Natural killer cell (primary cell): ENCODE measurements at regions of chr1 and their contacts with region 1.

Region 1: DNA sequence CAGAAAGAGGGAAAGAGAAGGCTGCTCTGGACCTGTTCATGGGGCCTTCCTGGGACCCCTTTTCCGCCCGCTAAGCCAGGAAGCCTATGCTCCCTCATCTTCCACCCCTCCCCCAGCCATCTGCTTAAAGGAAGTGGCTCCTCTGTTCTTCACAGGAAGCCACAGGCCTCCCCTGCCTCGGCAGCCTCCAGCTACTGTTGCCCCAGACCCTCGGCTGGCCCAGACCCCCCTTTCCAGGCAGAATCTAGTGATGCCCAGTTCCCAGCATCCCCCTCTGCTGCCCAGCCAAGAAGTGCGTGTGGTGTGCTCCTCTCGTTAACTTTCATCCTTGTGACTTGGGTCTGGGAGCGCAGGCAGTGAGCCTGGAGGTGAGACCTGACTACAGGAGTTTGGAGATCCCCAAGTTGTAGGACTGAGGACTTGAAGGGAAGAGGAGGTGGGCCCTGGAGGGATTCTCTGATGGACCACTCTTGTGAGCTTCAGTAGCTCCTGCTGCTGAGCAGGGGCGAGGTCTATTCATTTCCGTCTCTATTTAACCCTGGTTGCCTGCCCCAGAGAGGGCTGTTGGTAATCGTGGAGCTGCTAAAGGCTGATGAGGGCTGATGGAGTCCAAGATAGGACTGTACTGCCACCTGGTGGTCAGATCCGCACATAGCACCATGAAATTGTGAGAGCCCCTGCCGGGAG is 9.1 kb downstream of the IFI6 start:
- DNase-seq: peak; percentile 89 to 95
- ATAC-seq: peak; percentile 53 to 82 (median 54)
- H3K4me3 ChIP-seq: peak overlapping the region; percentile 5
- H3K4me3 Mint-ChIP-seq: peak overlapping the region; percentile 89
- H3K27ac ChIP-seq: peak overlapping the region; percentile 86
- H3K27ac Mint-ChIP-seq: peak overlapping the region; percentile 99 to 100
- H3K4me1 ChIP-seq: peaks cover 56% of the 10 kb centered on the region
- H3K4me1 Mint-ChIP-seq: peaks cover 50 to 59% of the 10 kb centered on the region in 2 donors
- H3K27me3 ChIP-seq: no peaks in the 10 kb centered on the region
- H3K27me3 Mint-ChIP-seq: no peaks in the 10 kb centered on the region
- CTCF ChIP-seq: peak; percentile 83

Region 2: GRCh38 chr1:26900001-26900814 is 762.6 kb before region 1 on chr1 and contains the start of gene GPATCH3:
- intact Hi-C with region 1: no loop called
- DNase-seq: peak; percentile 79 to 96
- ATAC-seq: peak; percentile 91 to 93 (median 92)
- H3K4me3 ChIP-seq: peak within 1 kb of the TSS; percentile 92
- H3K4me3 Mint-ChIP-seq: peak within 1 kb of the TSS; percentile 97
- H3K27ac ChIP-seq: peak within 1 kb of the TSS; percentile 87
- H3K27ac Mint-ChIP-seq: peak within 1 kb of the TSS; percentile 95 to 96
- H3K4me1 ChIP-seq: peaks cover 14% of the 10 kb centered on the region
- H3K4me1 Mint-ChIP-seq: peaks cover 24 to 28% of the 10 kb centered on the region in 2 donors
- H3K27me3 ChIP-seq: no peaks in the 10 kb centered on the region
- H3K27me3 Mint-ChIP-seq: no peaks in the 10 kb centered on the region
- CTCF ChIP-seq: no peak
- total RNA-seq, gene GPATCH3: 25.5 to 41.3 (median 34.6) TPM

Region 3: DNA sequence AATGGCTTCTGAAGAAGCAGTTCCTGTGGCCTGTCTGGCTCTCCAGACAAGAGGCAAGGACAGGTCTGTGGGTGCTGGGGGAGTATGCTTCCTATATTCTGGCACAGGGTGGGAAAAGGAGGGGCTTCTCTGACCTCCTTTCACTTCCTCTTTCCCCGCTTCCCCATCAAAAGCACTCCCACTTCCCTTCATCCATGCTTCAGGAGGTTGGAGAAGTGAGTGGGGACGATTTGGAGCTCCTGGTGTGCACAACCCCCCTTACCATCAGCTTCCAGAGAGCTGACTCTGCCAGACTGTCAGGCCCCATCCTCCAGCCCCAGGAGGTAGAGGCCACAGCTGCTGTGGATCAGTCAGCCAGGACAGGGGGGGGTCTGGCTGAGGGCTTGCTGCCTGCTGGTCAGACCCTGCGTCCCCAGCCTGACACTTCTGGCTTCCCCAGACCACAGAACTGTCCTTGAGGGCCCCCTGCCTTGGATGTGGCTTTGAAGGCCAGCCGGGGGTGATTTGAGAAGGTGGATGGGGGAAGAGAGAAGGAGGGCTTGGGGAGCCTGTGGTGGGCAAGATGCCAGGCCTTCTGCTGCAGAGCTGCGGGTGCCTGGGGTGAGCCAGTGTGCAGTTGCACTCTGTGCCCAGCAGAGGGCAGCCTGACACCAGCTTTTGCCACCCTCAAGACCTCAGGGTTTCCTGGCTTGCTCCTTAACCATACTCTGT is 362.4 kb before region 1 on chr1:
- intact Hi-C with region 1: loop called (anchors 2 kb)
- DNase-seq: peak; percentile 77 to 94
- ATAC-seq: peak; percentile 91 to 98 (median 91)
- H3K4me3 ChIP-seq: no peak overlapping the region
- H3K4me3 Mint-ChIP-seq: no peak overlapping the region
- H3K27ac ChIP-seq: no peak overlapping the region
- H3K27ac Mint-ChIP-seq: no peak overlapping the region
- H3K4me1 ChIP-seq: peaks cover 18% of the 10 kb centered on the region
- H3K4me1 Mint-ChIP-seq: peaks cover 6 to 7% of the 10 kb centered on the region in 2 donors
- H3K27me3 ChIP-seq: no peaks in the 10 kb centered on the region
- H3K27me3 Mint-ChIP-seq: no peaks in the 10 kb centered on the region
- CTCF ChIP-seq: peak; percentile 91

Region 4: DNA sequence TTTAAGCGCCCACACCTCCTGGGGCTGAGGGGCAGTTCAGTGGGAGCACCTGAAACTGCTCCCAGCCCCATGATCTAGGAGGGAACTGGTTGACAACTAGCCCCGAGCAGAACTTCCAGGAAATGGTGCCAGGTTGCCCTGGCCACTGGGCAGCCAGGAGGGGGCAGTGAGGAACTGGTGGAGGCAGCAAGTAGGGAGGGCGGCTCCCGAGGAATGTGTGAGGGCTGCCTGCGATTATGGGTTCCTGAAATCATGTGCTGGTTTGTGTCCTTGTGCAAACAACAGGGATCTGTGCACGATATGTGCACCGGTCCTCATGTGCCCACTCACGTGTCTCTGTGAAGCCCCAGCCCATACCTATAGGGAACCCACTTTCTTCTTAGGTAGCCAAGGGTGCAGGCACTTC is 260.5 kb before region 1 on chr1:
- intact Hi-C with region 1: loop called (anchors 2 kb)
- DNase-seq: peak in 1 of 2 donors; percentile 39
- ATAC-seq: no peak
- H3K4me3 ChIP-seq: no peak overlapping the region
- H3K4me3 Mint-ChIP-seq: no peak overlapping the region
- H3K27ac ChIP-seq: peak overlapping the region; percentile 74
- H3K27ac Mint-ChIP-seq: peak overlapping the region; percentile 86 to 94
- H3K4me1 ChIP-seq: peaks cover 41% of the 10 kb centered on the region
- H3K4me1 Mint-ChIP-seq: peaks cover 33 to 41% of the 10 kb centered on the region in 2 donors
- H3K27me3 ChIP-seq: no peaks in the 10 kb centered on the region
- H3K27me3 Mint-ChIP-seq: no peaks in the 10 kb centered on the region
- CTCF ChIP-seq: no peak

Region 5: DNA sequence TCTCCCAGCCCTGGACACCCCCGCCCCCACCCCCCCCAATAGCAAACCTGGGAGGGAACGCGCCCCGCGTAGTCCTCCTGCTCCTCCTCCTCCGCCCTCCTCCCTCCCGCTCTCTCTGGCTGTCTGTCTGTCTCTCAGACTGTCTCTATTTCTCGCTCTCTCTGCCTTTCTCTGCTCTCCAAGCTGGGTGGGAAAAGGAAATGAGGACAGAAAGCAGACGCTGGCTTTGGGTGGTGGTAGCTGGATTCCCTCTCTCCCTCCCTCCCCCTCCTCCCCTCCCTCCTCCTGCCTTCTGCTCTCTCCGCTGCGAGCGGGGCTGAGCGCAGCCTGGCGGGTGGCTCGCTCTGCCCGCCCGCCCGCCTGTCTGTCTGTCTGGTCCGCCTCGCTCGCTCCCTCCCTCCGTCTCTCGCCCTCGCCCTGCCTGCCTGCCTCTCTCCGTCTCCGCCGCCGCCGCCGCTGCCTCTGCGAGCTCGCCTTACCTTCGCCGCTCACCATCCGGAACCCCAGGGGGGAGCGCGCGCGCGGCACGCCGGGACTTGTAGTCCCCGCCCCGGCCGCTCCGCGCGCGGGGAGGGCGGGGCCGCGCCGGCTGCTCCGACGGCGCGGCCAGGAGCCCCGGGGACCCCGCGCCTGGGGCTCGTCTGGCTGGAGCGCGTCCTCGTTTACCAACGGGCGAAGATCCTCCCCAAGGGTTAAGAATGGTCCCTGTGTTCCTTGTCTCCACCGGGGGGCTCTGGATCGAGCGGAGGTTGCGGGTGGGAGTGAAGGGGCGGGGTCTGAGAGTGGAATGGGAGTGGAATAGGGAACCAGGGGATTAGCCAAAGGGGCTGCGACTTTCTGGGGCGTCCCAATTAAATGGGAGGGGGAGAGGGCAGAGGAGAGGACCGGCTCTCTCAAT is 58.9 kb before region 1 on chr1 and contains the start of gene AHDC1:
- intact Hi-C with region 1: loop called (anchors 1 kb)
- DNase-seq: peak; percentile 89 to 93
- ATAC-seq: peak; percentile 64 to 89 (median 77)
- H3K4me3 ChIP-seq: peak within 1 kb of the TSS; percentile 87
- H3K4me3 Mint-ChIP-seq: peak within 1 kb of the TSS; percentile 94
- H3K27ac ChIP-seq: peak within 1 kb of the TSS; percentile 71
- H3K27ac Mint-ChIP-seq: peak within 1 kb of the TSS; percentile 81 to 91
- H3K4me1 ChIP-seq: peaks cover 77% of the 10 kb centered on the region
- H3K4me1 Mint-ChIP-seq: peaks cover 27 to 49% of the 10 kb centered on the region in 2 donors
- H3K27me3 ChIP-seq: no peaks in the 10 kb centered on the region
- H3K27me3 Mint-ChIP-seq: no peaks in the 10 kb centered on the region
- CTCF ChIP-seq: no peak
- total RNA-seq, gene AHDC1: 39.6 to 67.0 (median 47.0) TPM

Region 6: DNA sequence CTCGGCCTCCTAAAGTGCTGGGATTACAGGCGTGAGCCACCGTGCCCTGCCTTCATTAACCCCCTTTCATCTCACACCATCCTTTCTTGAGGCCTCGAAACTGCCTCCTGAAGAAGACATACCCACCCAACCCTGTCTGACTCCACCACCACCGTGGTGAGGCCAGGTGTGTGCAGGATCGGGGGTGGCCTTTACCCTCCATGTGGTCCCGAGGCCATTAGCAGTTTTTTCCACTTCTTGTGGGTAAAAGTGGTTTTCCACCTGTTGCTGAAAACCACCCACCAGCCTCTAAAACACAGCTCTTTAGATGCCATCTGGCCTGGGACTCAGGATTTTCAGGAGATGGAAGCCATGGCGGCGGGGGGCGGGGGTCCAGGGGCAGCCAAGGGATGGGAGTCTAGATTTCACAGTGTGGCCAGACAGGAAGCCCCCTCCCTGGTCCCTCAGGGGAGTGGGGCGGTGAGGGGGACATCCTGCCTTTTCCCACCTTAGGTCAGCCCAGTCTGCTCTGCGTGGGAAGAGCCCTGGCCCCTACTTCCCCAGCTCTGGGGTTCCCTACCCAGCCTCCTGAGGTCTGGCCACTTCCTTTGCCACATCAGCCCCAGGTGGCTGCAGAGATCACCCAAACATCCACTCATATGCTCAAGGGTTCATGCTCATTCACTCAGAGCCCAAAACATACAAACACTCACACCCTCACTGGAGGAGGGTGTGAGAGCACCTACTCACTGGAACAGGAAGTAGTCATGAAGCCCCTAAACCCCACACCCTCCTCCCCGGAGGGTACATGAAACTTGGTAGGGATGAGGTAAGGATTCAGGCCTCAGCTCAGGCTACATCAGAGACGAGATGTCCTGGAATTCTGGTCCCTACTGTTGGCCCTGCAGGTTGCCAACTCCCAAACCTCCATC is 30.2 kb before region 1 on chr1:
- intact Hi-C with region 1: loop called (anchors 1 kb)
- DNase-seq: peak in 1 of 2 donors; percentile 63
- ATAC-seq: peak; percentile 51 to 61 (median 57)
- H3K4me3 ChIP-seq: peak overlapping the region; percentile 71
- H3K4me3 Mint-ChIP-seq: peak overlapping the region; percentile 85
- H3K27ac ChIP-seq: peak overlapping the region; percentile 94
- H3K27ac Mint-ChIP-seq: peak overlapping the region; percentile 89 to 92
- H3K4me1 ChIP-seq: peaks cover 93% of the 10 kb centered on the region
- H3K4me1 Mint-ChIP-seq: peaks cover 64 to 87% of the 10 kb centered on the region in 2 donors
- H3K27me3 ChIP-seq: no peaks in the 10 kb centered on the region
- H3K27me3 Mint-ChIP-seq: no peaks in the 10 kb centered on the region
- CTCF ChIP-seq: no peak